H1 (cell line): ENCODE measurements at regions of chr17 and their contacts with region 1.

Region 1: DNA sequence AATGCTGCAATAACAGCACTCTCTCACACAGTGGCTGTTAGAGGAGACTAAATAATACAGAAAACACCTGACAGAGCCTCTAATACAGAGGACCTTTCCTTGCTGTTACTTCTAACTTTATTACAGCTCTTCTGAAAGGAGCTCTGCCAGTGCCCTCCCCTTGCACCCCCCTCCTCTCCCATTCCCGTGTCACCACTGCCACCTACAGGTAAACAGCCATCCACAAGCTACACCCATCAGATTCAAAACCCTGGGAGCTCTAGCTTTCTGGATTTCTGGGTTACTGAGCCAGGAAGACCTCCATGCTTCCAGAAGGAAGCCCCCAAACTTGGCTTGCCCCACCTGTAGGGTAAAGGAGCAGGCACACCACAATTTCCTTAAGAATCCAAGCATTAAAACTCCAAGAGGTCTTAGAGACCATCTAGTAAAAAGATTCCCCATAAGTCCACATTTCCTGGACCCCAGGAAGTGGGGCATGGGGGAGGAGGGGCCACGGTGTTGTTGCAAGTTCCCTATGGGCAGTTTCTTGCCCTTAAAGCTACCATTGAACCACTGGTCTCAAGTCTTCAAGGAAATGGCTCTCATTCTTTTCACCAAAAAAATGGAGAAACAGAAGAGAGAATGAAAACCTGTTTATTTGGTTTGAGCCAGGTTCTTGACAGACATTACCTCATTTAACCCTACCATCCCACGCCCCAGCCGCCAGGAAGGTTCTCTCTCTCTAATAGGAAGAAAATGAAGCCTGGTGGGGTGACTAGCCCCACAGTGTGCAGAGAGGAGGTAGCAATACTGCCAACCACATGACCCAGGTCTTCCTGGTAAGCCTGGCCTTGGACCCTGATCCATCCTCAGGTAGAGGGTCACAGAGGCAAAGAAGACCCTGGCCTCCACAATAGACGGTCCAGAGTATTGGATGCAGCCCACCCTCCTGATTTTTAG is 52.8 kb downstream of the TOM1L2 start:
- DNase-seq: peak in 1 of 2 experiments; percentile 75
- H3K4me3 ChIP-seq: no peak overlapping the region
- H3K27ac ChIP-seq: no peak overlapping the region
- H3K4me1 ChIP-seq: peaks cover 13 to 18% (median 16%) of the 10 kb centered on the region in 4 experiments
- H3K27me3 ChIP-seq: no peaks in the 10 kb centered on the region; a peak in 1 of 7 replicates
- CTCF ChIP-seq: peak; percentile 79 to 91 (median 86)
- EP300 ChIP-seq: no peak
- POLR2A ChIP-seq: no peak
- RAD21 ChIP-seq: peak; percentile 94 to 99

Region 2: DNA sequence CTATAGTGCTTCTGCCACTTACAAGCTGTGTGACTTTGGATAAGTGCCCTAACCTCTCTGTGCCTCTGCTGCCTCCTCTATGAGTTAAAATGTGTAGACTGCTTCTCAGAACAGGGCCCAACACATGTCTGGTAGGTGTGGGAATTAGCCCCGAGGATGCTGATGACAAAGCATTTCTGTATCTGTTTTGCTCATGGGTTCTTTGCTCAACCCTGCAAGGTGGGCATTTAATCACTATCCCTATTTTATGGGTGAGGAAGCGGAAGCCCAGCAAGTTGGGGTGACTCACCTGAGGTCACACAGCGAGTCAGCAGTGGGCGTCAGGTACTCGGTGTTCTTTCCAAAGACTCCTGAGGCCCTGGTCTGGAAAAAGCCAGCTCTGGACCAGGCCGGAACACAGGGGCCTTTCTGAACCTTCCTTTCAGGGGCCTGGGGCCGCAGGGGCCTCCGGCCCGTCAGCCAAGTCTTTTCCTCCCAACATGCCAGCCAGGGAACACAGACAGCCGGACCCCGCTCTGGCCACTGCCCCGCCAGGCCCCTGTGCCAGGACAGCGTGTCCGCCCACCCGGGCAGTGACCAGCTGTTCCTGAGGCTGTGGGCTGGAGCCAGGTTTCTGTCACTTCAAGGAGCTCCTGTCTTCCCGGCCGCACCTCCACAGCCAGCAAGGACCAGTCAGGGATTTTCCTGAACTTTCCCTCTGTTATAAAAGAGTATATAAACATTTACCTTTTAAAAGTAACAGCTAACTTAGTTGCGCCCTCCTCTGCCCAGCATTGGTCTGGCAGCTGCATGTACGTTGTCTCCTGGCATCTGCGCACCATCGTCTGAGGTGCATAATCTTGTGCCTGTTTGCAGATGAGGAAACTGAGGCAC is 145.2 kb before region 1 on chr17:
- CTCF ChIA-PET with region 1: no interaction called
- POLR2A ChIA-PET with region 1: no interaction called
- DNase-seq: no peak
- H3K4me3 ChIP-seq: no peak overlapping the region
- H3K27ac ChIP-seq: no peak overlapping the region
- H3K4me1 ChIP-seq: peaks cover under 1 to 8% (median 3%) of the 10 kb centered on the region in 4 experiments; a peak in 5 of 7 replicates
- H3K27me3 ChIP-seq: peaks cover 0 to 5% (median under 1%) of the 10 kb centered on the region in 4 experiments; a peak in 2 of 7 replicates
- CTCF ChIP-seq: peak; percentile 51 to 60 (median 51); a peak in 3 of 4 replicates
- EP300 ChIP-seq: no peak
- POLR2A ChIP-seq: no peak
- RAD21 ChIP-seq: peak; percentile 54 to 66

Region 3: GRCh38 chr17:17859909-17860765 is 59.3 kb before region 1 on chr17:
- CTCF ChIA-PET with region 1: interaction called, 40 read pairs
- POLR2A ChIA-PET with region 1: no interaction called
- DNase-seq: peak in 1 of 2 experiments; percentile 86
- H3K4me3 ChIP-seq: no peak overlapping the region
- H3K27ac ChIP-seq: no peak overlapping the region
- H3K4me1 ChIP-seq: peaks cover 0 to 10% (median 3%) of the 10 kb centered on the region in 4 experiments; a peak in 2 of 7 replicates
- H3K27me3 ChIP-seq: no peaks in the 10 kb centered on the region
- CTCF ChIP-seq: peak; percentile 96 to 100 (median 99)
- EP300 ChIP-seq: peak in 1 of 2 experiments; percentile 63; a peak in 1 of 3 replicates
- POLR2A ChIP-seq: no peak
- RAD21 ChIP-seq: peak; percentile 94 to 96

Region 4: GRCh38 chr17:17877529-17878358 is 41.7 kb before region 1 on chr17:
- CTCF ChIA-PET with region 1: interaction called, 13 read pairs
- POLR2A ChIA-PET with region 1: no interaction called
- DNase-seq: no peak
- H3K4me3 ChIP-seq: no peak overlapping the region
- H3K27ac ChIP-seq: no peak overlapping the region
- H3K4me1 ChIP-seq: peaks cover 11 to 28% (median 18%) of the 10 kb centered on the region in 4 experiments
- H3K27me3 ChIP-seq: no peaks in the 10 kb centered on the region; a peak in 1 of 7 replicates
- CTCF ChIP-seq: 0 out of 4 replicates have a peak, but pooled peaks of 1 of the 3 experiments have one; percentile 6
- EP300 ChIP-seq: no peak
- POLR2A ChIP-seq: no peak
- RAD21 ChIP-seq: no peak

Region 5: GRCh38 chr17:17900615-17901520 is 18.6 kb before region 1 on chr17:
- CTCF ChIA-PET with region 1: interaction called, 85 read pairs
- POLR2A ChIA-PET with region 1: interaction called, 5 read pairs
- DNase-seq: no peak
- H3K4me3 ChIP-seq: no peak overlapping the region
- H3K27ac ChIP-seq: no peak overlapping the region
- H3K4me1 ChIP-seq: peaks cover 0 to 3% (median under 1%) of the 10 kb centered on the region in 4 experiments; a peak in 2 of 7 replicates
- H3K27me3 ChIP-seq: no peaks in the 10 kb centered on the region
- CTCF ChIP-seq: no peak
- EP300 ChIP-seq: no peak
- POLR2A ChIP-seq: no peak
- RAD21 ChIP-seq: no peak

Region 6: DNA sequence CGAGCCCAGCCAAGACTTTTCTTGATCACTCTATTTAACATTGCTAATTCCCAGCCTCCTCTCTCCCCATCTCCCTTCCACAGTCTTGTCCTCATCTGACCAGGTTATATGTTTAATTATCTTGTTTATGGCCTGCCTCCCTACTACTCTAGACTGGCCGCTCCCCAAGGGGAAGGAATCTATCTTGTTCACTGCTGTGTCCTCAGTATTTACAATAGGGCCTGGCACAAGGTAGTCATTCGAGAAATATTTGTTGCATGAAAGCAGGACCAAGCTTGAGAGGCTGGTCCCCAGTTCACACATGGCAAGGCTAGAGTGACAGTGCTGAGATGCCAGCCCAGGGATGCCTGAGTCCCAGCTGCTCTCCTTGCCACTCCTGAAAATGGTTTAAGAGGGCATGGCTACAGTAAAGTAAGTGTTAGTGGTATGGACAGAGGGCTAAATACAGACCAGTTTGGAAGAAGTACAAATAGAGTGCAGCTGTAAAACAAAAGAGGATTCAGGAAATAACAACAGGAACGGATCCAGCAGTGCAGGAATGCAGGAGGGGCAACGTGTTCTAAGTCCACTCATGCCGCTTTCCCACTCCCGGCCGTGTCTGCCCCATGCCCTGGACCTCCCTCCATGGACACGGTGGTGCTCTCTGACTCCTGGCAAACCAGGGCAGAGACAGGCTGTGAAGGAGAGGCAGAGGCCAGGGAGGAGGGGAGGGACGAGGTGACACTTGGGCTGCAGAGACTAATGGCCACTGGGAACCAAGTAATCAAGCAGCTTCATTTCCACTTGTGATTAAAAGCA is 12.8 kb before region 1 on chr17:
- CTCF ChIA-PET with region 1: interaction called, 85 read pairs
- POLR2A ChIA-PET with region 1: interaction called, 5 read pairs
- DNase-seq: no peak
- H3K4me3 ChIP-seq: no peak overlapping the region
- H3K27ac ChIP-seq: no peak overlapping the region
- H3K4me1 ChIP-seq: peaks cover 0 to 8% (median 4%) of the 10 kb centered on the region in 4 experiments; a peak in 3 of 7 replicates
- H3K27me3 ChIP-seq: no peaks in the 10 kb centered on the region
- CTCF ChIP-seq: no peak
- EP300 ChIP-seq: no peak
- POLR2A ChIP-seq: no peak
- RAD21 ChIP-seq: no peak

Region 7: DNA sequence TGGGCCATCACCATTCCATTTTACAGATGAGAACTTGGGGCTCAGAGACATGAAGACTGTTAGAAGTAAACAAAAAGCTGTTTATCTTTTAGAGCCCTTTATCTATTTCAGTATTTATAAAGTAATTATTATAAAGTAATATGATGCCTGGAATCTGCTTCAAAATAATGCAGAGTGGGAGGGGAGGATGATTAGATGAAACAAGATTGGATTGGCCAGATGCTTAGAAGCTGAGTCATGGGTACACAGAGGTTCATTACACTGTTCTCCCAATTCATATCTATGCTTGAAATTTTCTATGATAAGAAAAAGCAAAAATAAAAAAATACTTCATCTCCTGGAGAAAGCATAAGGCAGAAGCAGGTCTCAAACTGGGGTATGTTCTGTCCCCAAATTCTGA is 23.4 kb after region 1 on chr17:
- CTCF ChIA-PET with region 1: interaction called, 15 read pairs
- POLR2A ChIA-PET with region 1: interaction called, 3 read pairs
- DNase-seq: no peak
- H3K4me3 ChIP-seq: no peak overlapping the region
- H3K27ac ChIP-seq: no peak overlapping the region
- H3K4me1 ChIP-seq: peaks cover 3 to 16% (median 12%) of the 10 kb centered on the region in 4 experiments
- H3K27me3 ChIP-seq: no peaks in the 10 kb centered on the region
- CTCF ChIP-seq: no peak
- EP300 ChIP-seq: no peak
- POLR2A ChIP-seq: no peak
- RAD21 ChIP-seq: no peak

Region 8: GRCh38 chr17:18332909-18333489 is 413.6 kb after region 1 on chr17:
- CTCF ChIA-PET with region 1: no interaction called
- POLR2A ChIA-PET with region 1: no interaction called
- DNase-seq: no peak
- H3K4me3 ChIP-seq: no peak overlapping the region
- H3K27ac ChIP-seq: no peak overlapping the region
- H3K4me1 ChIP-seq: no peaks in the 10 kb centered on the region
- H3K27me3 ChIP-seq: no peaks in the 10 kb centered on the region
- CTCF ChIP-seq: no peak
- EP300 ChIP-seq: no peak
- POLR2A ChIP-seq: no peak
- RAD21 ChIP-seq: no peak